ENCODE measurements at regions of chr2 and their contacts with region 1.

Region 1: GRCh38 chr2:39124000-39124745 is 3.3 kb upstream of the SOS1 start:
- DNase-seq: peak; percentile 98
- ATAC-seq: peak; percentile 73
- H3K4me3 ChIP-seq: peak overlapping the region; percentile 73
- H3K27ac ChIP-seq: peak overlapping the region; percentile 58
- H3K4me1 ChIP-seq: peaks cover 26% of the 10 kb centered on the region
- H3K27me3 ChIP-seq: no peaks in the 10 kb centered on the region
- CTCF ChIP-seq: peak; percentile 61

Region 2: GRCh38 chr2:39059366-39059952 is 64.7 kb before region 1 on chr2:
- CTCF ChIA-PET with region 1: no interaction called
- POLR2A ChIA-PET with region 1: no interaction called
- intact Hi-C with region 1: loop called (anchors 2 kb)
- DNase-seq: peak; percentile 77
- ATAC-seq: no peak
- H3K4me3 ChIP-seq: no peak overlapping the region
- H3K27ac ChIP-seq: no peak overlapping the region
- H3K4me1 ChIP-seq: no peaks in the 10 kb centered on the region
- H3K27me3 ChIP-seq: no peaks in the 10 kb centered on the region
- CTCF ChIP-seq: peak; percentile 89

Region 3: DNA sequence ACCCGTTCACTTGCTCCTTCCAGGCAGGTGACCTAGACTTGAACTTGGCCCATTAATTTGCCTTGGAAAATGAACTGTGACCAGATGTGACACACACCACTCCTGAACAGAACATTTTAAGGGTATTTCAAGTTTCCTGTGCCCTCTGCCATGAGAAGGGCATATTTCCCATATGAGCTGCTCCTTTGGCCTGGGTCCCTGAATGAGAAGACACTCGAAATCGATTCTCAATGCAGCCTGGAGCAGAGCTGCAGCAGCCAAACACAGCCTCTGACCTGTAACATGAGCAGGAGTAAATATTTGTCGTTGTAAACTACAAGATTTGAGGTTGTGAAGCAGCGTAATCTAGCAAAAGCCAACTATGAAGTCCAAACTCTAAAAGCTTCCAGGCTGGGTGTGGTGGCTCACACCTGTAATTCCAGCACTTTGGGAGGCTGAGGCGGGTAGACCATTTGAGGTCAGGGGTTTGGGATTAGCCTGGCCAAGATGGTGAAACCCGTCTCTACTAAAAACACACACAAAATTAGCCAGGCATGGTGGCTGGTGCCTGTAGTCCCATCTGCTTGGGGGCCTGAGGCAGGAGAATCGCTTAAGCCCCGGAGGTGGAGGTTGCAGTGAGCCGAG is 26.8 kb after region 1 on chr2:
- CTCF ChIA-PET with region 1: interaction called, 12 read pairs
- POLR2A ChIA-PET with region 1: no interaction called
- intact Hi-C with region 1: no loop called
- DNase-seq: peak; percentile 10
- ATAC-seq: peak; percentile 27
- H3K4me3 ChIP-seq: no peak overlapping the region
- H3K27ac ChIP-seq: no peak overlapping the region
- H3K4me1 ChIP-seq: peaks cover 7% of the 10 kb centered on the region
- H3K27me3 ChIP-seq: no peaks in the 10 kb centered on the region
- CTCF ChIP-seq: no peak

Region 4: GRCh38 chr2:39202639-39203369 is 78.6 kb after region 1 on chr2:
- CTCF ChIA-PET with region 1: interaction called, 13 read pairs
- POLR2A ChIA-PET with region 1: interaction called, 4 read pairs
- intact Hi-C with region 1: no loop called
- DNase-seq: peak; percentile 47
- ATAC-seq: peak; percentile 93
- H3K4me3 ChIP-seq: no peak overlapping the region
- H3K27ac ChIP-seq: peak overlapping the region; percentile 20
- H3K4me1 ChIP-seq: peaks cover 15% of the 10 kb centered on the region
- H3K27me3 ChIP-seq: no peaks in the 10 kb centered on the region
- CTCF ChIP-seq: no peak

Region 5: DNA sequence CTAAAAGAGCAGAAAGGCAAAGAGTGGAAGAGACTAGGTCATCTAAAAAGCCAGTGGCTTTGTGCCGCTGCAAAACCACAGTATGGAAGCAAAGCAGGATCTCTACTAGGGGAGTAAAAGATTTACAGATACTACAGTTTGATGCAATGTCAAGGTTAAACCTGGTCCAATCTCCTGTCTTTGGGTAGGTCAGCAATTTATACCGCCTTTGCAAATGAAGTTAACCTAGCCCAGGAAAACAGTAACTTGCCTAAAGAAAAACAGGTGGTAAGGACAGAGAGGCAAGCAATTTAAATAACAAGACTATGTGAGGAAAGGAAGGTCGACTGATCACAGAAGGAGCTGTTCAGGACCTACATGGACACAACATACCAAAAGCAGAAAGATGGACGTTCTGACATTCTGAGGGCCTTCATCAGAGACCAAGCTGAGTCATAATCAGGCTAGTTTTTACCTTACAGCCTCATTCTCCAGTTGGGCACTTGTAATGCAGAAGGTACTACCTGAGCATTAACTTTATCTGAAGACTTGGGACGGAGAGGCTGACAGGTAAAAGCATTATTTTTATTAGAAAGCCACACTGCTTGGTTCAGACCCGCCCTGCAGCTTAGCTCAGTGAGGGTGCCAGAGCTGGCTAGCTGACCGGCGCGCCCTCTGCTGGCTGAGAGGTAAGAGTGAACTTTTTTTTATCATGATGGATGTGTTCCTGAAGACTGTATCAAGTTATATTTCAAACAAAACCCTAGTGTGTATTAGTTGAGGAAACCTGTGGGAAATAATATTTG is 103.6 kb after region 1 on chr2:
- CTCF ChIA-PET with region 1: interaction called, 12 read pairs
- POLR2A ChIA-PET with region 1: interaction called, 6 read pairs
- intact Hi-C with region 1: loop called (anchors 1 kb)
- DNase-seq: peak; percentile 65
- ATAC-seq: peak; percentile 81
- H3K4me3 ChIP-seq: no peak overlapping the region
- H3K27ac ChIP-seq: no peak overlapping the region
- H3K4me1 ChIP-seq: no peaks in the 10 kb centered on the region
- H3K27me3 ChIP-seq: no peaks in the 10 kb centered on the region
- CTCF ChIP-seq: peak; percentile 94

Measured in PC-3 (cell line).